GM10248 (cell line): ENCODE measurements at regions of chr1 and their contacts with region 1.

Region 1: DNA sequence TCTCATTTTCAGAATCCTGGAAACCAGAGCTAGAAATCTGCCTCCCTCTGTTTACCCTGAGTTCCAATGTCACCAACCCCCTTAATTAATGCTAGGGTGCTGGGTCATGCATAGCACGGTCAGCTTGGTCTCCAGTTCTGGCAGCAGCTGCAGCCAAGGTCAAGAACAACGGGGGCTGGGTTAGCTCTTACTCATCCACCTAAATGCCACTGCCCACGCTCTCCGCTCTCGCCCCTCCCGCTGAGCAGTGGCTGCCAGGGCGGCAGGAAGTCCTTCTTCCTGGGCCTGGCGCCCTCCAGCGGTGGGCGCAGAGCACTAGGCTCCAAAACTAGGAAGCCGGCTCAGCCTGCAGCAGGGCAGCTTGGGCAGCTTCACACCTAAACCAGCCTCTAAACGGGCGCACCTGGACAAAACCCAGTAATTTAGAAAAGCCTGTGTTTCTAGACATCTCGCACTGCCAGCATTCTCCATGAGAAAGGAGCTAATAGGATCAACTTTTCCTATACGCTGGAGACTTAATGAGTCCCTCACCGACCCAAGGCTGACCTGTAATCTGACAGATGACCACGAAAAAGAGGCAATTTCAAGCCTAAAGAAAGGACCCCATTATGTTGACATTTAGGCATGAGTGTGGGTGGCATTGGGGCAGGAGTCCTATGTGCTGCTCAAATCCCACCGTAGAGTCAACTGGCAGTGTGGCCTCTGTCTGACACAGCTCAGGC is 78.3 kb upstream of the LRRN2 start:
- DNase-seq: peak; percentile 82
- CTCF ChIP-seq: peak; percentile 86

Region 2: DNA sequence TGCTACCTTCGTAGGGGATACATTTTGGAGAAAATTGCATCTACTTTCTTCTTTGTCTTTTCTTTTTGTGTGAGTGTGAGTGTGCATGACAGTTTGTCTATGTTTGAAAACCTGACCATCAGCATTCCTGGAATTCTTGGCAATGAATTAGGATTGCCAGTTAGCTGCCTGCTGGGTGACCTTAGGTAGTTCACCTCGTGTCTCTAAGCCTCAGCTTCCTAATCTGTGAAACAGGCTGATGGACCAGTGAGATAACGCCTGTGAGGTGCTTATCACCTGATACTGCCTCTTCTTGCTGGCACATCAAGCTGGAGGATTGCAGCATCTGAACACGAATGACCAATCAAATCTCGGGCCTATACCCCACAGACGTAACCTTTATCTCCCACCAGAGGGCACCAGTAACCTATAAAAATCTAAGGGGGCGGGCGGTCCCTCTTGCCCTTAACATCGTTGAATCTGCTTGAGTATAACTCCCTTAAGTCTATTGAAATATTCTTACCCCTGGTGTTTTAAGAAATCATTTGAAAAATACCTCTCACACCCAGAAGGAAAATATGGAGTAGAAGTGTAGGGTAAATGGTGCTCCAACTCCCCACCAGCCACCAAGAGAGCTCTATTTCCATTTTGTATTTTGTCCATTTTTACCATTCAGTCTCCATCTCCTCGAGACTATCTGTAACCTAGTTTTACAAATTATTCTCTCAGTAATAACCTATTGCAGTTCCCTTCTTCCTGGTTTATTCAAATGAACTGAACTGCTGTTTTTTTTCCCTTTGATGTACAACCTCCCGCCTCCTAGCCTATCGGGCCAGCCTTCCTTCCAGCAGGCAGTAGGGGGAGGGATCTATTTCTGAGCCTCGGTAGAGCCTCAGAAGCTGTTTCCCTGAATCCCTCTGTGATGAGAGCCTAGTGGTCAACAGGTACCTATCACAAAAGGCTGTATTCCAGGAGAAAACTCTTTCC is 198.0 kb before region 1 on chr1:
- CTCF ChIA-PET with region 1: interaction called, 42 read pairs
- POLR2A ChIA-PET with region 1: no interaction called
- DNase-seq: peak; percentile 80
- CTCF ChIP-seq: peak; percentile 61

Region 3: DNA sequence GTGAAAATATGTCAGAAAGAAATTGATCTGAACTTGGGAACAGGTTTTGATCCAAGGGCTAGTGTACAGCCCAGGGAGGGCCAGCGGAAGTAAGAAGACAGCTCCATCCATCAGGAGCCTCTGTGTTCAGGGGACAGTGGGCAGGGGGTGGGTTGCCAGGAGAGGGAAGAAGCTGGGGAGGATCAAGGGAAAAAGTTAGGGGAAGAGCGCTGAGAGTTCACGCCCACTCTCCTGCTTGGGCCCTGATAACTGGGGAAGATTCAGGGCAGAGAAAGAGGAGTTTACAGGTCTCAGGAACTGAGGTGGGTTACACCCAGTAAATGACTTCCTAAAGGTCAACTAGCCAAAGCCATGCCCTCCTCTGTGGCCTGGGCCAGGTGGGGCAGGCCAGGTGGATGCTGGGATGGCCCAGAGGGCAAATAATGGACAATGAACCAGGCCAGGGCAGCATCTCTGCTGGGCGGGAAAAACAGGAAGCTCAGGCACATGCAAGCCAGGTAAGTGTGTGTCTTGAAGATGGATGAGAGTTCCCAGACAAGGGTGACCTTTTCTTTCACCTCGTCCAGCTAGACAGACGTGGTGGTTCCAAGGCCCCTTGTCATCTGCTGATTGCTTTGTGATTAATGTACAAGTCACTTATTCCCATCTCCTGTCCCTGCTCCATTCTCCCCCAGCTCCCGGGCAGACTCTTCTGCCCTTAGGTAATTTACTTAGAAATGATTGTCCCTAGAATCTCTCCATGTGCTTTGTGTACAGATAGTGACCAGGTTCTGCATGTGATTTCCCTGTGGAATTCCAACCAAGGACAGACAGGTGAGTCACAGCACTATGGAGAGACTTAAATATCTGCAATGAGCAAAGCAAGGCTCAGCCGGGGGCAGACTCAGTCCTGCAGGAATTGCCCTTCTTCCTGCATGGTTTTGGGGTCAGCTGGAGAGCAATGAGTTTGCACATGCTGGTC is 190.7 kb before region 1 on chr1:
- CTCF ChIA-PET with region 1: interaction called, 42 read pairs
- POLR2A ChIA-PET with region 1: no interaction called
- DNase-seq: no peak
- CTCF ChIP-seq: no peak

Region 4: GRCh38 chr1:204746838-204747442 is 16.9 kb before region 1 on chr1:
- CTCF ChIA-PET with region 1: interaction called, 148 read pairs
- POLR2A ChIA-PET with region 1: no interaction called
- DNase-seq: peak; percentile 52
- CTCF ChIP-seq: peak; percentile 86

Region 5: DNA sequence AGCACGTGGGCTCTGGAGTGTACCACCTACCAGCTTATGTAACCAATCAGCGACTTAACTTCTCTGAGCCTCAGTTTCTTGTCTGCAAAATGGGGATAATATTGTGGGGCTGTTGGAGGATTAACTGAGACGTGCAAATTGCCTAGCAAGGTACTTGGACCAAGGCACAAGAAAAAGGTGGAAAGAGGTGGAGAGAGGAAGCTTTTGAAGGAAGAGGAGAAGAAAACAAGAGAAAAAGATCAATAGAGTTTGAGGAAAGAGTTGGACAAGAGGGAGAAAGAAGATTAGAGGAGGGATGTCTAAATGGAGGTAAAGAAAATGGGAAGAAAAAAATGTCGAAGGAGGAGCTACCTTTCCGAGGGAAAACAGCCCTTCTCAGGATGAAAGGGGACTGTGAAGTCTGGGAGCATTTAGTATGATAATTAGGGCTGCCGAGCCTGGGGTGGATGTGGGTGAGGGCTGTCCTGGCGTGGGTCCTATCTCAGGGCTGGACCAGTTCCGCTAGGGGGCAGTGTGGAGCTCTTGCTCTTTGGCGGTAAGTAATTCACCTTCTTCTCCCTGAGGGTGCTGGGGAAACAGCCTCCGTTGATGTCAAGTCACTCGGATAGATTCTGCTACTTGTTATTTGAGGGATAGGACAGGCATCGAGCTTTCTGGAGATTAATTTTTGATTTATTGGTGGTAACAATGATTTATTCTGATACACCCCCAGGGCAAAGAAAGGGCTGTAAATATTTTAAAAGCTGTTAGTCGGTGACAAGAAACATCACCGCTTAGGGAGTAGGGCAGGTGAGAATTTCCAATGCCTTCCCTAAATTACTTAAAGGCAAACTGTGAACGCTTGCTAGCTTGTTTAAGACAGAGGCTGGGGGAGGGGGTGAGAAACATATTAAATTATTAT is 27.8 kb after region 1 on chr1:
- CTCF ChIA-PET with region 1: interaction called, 18 read pairs
- POLR2A ChIA-PET with region 1: no interaction called
- DNase-seq: peak; percentile 74
- CTCF ChIP-seq: peak; percentile 85